Testis (tissue), 5 donors: ENCODE measurements at regions of chr16 and their contacts with region 1.

Region 1: GRCh38 chr16:23556881-23557778 is at the starts of genes EARS2 and UBFD1:
- DNase-seq: peak; percentile 99
- H3K4me3 ChIP-seq: peak within 1 kb of the TSS; percentile 91 to 94
- H3K27ac ChIP-seq: peak within 1 kb of the TSS; percentile 87 to 96
- H3K4me1 ChIP-seq: peaks cover 26% of the 10 kb centered on the region
- H3K27me3 ChIP-seq: no peaks in the 10 kb centered on the region
- CTCF ChIP-seq: peak; percentile 92 to 100 (median 100)
- POLR2A ChIP-seq: no peak
- total RNA-seq, gene EARS2: 55.9 to 76.7 TPM
- total RNA-seq, gene UBFD1: 269 to 275 TPM

Region 2: DNA sequence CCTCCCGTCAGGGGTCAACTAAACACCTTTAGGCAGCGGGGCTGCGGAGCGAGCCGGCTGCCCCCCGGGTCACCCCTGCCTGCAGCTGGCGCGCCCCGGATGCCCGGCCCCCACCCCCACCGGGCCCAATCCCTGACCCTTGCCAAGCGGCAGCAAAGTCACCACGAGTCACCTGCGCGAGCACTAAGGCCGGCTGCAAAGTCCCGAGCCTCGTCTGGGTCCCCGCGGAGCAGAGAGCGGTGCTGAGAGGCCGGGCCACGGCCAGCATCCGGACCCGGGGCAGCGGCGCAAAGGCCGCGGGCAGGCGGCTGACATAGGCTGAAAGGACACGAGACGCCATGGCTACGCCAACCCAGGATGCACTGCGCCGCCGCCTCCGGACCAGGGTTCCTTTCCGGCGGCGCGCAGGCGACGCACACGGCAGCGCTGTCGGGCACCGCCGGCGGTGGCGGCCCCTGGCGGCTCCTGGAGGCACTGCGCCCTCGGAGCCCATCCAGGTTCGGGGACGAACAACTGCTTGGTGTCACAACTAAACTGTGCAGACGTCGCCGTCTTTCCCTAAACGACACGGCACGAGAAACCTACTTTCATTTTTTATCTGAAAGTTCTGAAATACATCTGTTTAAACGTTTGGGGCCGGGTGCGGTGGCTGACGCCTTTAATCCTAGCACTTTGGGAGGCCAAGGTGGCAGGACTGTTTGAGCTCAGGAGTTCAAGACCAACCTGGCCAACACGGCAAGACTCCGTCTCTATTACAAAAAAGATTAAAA is 39.0 kb after region 1 on chr16 and contains the start of gene NDUFAB1:
- intact Hi-C with region 1: loop called (anchors 2 kb)
- DNase-seq: peak; percentile 95
- H3K4me3 ChIP-seq: peak within 1 kb of the TSS; percentile 94 to 98
- H3K27ac ChIP-seq: peak within 1 kb of the TSS; percentile 78 to 79
- H3K4me1 ChIP-seq: peaks cover 12% of the 10 kb centered on the region
- H3K27me3 ChIP-seq: no peaks in the 10 kb centered on the region
- CTCF ChIP-seq: peak; percentile 100
- POLR2A ChIP-seq: no peak
- total RNA-seq, gene NDUFAB1: 65.4 to 79.5 TPM